ENCODE measurements at regions of chr2 and their contacts with region 1.

Region 1: GRCh38 chr2:84925724-84926376 is 20.4 kb downstream of the TMSB10 start:
- DNase-seq: peak; percentile 99
- H3K4me3 Mint-ChIP-seq: peak overlapping the region; percentile 86
- H3K27ac Mint-ChIP-seq: peak overlapping the region; percentile 90
- H3K4me1 Mint-ChIP-seq: peaks cover 64% of the 10 kb centered on the region
- H3K27me3 Mint-ChIP-seq: no peaks in the 10 kb centered on the region

Region 2: DNA sequence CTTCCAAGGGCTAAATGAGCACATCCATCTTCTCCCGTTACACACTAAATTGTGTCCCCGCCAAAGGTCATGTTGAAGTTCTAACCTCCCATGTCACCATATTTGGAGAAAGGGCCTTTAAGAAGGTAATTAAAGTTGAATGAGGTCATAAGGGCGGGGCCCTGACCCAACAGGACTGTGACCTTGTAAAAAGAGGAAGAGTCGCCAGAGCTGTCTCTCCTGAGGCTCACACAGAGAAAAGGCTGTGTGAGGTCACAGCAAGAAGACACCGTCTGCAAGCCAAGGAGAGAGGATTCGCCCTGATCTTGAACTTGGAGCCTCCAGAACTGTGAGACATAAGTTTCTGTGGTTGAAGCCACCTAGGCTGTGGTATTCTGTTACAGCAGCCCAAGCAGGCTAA is 69.1 kb before region 1 on chr2:
- CTCF ChIA-PET with region 1: interaction called, 20 read pairs
- DNase-seq: peak; percentile 62
- H3K4me3 Mint-ChIP-seq: peak overlapping the region; percentile 50
- H3K27ac Mint-ChIP-seq: peak overlapping the region; percentile 97
- H3K4me1 Mint-ChIP-seq: peaks cover 95% of the 10 kb centered on the region
- H3K27me3 Mint-ChIP-seq: no peaks in the 10 kb centered on the region

Region 3: GRCh38 chr2:84888401-84889276 is 37.2 kb before region 1 on chr2:
- CTCF ChIA-PET with region 1: interaction called, 134 read pairs
- DNase-seq: peak; percentile 72
- H3K4me3 Mint-ChIP-seq: peak overlapping the region; percentile 49
- H3K27ac Mint-ChIP-seq: peak overlapping the region; percentile 90
- H3K4me1 Mint-ChIP-seq: peaks cover 70% of the 10 kb centered on the region
- H3K27me3 Mint-ChIP-seq: no peaks in the 10 kb centered on the region

Region 4: DNA sequence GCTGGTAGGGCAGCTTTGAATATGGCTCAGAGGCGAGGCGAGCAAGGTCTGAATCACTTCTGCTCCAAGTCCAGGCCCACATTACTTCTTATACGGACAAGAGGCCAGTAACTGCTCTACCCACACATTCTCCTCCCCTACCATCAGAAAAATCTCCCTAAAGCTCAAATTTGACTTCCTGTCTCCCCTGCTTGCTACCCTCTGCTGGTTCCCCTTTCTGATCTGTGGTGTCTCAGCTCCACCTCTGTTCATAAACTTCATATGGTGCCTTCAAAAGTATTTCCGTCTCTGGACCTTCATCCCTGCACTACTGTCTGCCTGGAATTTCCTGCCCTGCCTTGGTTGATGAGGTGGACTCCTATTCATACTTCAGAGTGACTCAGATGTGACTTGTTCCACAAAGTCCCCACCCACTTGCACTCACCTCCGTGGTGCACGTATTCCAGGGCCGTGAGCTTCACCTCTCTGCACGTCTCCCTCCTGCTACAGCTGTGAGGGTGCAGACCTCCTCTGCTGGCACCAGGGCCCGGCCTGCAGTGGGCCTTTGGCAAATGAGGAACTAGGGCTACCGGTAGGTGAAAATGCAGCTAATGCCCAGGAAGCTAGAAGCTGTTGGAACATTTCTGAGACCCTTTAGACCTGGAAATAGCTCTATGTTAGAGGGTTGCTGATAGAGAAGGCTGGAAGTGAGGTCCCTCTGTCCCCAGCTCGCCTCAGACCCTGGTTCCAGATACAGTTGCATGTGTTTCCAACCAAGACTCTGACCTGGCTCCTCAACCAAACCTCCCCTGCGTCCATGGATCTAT is 20.6 kb after region 1 on chr2:
- CTCF ChIA-PET with region 1: interaction called, 105 read pairs
- DNase-seq: peak; percentile 75
- H3K4me3 Mint-ChIP-seq: peak overlapping the region; percentile 31
- H3K27ac Mint-ChIP-seq: peak overlapping the region; percentile 89
- H3K4me1 Mint-ChIP-seq: peaks cover 52% of the 10 kb centered on the region
- H3K27me3 Mint-ChIP-seq: no peaks in the 10 kb centered on the region

Region 5: DNA sequence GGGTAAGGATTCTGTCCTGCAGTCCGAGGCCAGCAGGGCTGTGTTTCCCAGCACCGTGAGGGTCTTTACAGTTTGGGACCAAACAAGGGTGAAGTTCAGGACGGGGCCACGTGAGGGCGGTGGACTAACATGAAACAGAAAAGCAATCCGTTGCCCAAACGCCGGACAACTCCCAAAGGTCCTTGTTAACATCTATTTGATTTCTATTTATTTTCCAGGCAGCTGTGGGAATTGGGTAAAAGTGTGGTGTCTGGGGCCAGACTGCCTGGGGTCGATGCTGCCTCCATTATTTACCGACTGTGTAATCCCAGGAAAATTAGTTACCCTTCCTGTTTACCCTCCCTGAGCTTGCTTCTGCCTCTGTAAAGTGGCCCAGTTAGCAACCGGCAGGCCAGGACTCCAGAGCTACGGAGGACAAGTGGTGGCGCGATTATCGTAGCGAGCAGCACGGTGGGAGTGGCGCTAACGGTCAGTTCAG is 141.1 kb after region 1 on chr2:
- CTCF ChIA-PET with region 1: interaction called, 12 read pairs
- DNase-seq: peak; percentile 62
- H3K4me3 Mint-ChIP-seq: no peak overlapping the region
- H3K27ac Mint-ChIP-seq: no peak overlapping the region
- H3K4me1 Mint-ChIP-seq: peaks cover 3% of the 10 kb centered on the region
- H3K27me3 Mint-ChIP-seq: peaks cover 61% of the 10 kb centered on the region

Region 6: DNA sequence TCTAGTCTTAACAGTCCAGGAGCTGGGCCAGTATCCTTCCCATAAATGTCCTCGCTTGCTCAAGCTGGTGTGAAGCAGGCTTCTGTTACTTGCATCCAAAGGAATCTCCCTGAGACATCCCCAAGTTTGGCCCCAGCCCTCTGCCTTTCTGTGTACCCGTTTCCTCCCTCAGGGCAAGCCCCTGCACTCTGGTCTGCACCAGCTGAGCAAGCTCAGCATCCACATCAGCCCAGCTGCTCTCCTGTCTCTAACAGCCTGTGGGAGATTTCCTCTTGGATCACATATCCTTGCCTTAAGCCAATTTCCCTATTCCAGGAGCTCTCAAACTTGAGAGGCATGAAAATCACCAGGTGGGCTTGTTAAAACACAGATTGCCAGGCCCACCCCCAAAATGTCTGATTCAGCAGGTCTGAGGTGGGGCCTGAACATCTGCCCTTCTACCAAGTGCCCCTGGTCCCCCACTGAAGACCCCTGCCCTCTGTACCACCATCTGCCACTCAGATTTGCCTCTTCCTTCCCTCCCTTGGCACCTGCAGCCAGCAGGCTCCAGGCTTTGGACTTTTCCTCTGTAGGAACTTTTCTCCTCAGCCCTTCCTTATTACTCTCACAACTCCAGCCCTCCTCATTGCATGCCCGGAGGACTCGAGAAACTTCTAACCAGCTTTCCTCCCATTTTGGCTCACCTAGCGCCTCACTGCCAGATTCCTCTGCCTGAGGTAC is 1379.5 kb after region 1 on chr2:
- CTCF ChIA-PET with region 1: no interaction called
- DNase-seq: no peak
- H3K4me3 Mint-ChIP-seq: no peak overlapping the region
- H3K27ac Mint-ChIP-seq: no peak overlapping the region
- H3K4me1 Mint-ChIP-seq: no peaks in the 10 kb centered on the region
- H3K27me3 Mint-ChIP-seq: peaks cover 41% of the 10 kb centered on the region

Measured in activated naive CD4-positive, alpha-beta T cell treated with anti-CD3 and anti-CD28 coated beads, Interleukin-2, amount 10 ng/mL, durations not matched to agents 7 days and 5 days (primary cell).